GM12878 (cell line): ENCODE measurements at regions of chrX and their contacts with region 1.

Region 1: DNA sequence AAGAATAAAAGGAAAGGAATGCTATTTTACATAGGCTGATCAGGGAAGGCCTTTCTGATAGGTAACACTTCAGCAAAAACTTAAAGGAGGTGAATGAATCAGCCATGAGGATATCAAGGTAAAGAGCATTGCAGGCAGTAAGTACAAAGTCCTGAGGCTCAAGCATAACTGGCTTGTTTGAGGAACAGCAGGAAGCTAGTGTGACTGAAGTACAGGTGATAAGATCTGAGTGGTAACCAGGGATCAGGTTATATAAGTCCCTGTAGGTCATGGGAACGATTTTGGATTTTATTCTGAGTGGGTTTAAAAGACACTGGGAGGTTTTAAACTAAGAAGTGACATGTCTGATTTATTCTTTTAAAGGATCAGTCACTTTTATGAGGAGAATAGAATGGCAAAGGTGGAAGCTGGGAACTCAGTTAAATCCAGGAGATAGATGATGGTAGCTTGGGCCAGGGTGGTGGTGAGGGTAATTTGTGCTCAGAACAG is 47.1 kb upstream of the THOC2 start:
- DNase-seq: no peak
- ATAC-seq: no peak
- H3K4me3 ChIP-seq: no peak overlapping the region
- H3K27ac ChIP-seq: no peak overlapping the region
- H3K4me1 ChIP-seq: no peaks in the 10 kb centered on the region
- H3K27me3 ChIP-seq: no peaks in the 10 kb centered on the region
- CTCF ChIP-seq: no peak
- EP300 ChIP-seq: no peak
- POLR2A ChIP-seq: no peak
- RAD21 ChIP-seq: no peak

Region 2: DNA sequence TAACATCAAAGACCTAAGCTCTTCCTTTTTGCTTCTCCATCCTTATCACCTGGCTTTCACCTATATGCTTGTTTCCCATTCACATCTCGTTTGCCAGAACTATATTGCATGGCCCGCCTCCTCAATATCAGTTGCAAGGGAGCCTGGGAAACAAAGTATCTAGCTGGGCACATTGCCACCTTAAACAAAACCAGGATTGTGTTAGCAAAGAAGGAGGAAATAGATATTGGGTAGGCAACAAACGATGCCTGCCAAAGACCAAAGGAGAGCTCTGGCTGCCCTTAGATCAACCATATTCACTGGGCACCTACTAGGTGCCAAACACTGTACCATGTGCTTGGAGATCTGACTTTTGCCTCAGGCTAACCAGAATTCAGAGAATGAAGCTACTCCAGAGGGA is 488.3 kb before region 1 on chrX:
- CTCF ChIA-PET with region 1: no interaction called
- POLR2A ChIA-PET with region 1: no interaction called
- RAD21 ChIA-PET with region 1: no interaction called
- SMC1A ChIA-PET with region 1: no interaction called
- in situ Hi-C with region 1: no loop called
- intact Hi-C with region 1: no loop called
- DNase-seq: no peak
- ATAC-seq: no peak
- H3K4me3 ChIP-seq: no peak overlapping the region
- H3K27ac ChIP-seq: no peak overlapping the region
- H3K4me1 ChIP-seq: no peaks in the 10 kb centered on the region
- H3K27me3 ChIP-seq: no peaks in the 10 kb centered on the region
- CTCF ChIP-seq: no peak
- EP300 ChIP-seq: no peak
- POLR2A ChIP-seq: no peak
- RAD21 ChIP-seq: no peak

Region 3: DNA sequence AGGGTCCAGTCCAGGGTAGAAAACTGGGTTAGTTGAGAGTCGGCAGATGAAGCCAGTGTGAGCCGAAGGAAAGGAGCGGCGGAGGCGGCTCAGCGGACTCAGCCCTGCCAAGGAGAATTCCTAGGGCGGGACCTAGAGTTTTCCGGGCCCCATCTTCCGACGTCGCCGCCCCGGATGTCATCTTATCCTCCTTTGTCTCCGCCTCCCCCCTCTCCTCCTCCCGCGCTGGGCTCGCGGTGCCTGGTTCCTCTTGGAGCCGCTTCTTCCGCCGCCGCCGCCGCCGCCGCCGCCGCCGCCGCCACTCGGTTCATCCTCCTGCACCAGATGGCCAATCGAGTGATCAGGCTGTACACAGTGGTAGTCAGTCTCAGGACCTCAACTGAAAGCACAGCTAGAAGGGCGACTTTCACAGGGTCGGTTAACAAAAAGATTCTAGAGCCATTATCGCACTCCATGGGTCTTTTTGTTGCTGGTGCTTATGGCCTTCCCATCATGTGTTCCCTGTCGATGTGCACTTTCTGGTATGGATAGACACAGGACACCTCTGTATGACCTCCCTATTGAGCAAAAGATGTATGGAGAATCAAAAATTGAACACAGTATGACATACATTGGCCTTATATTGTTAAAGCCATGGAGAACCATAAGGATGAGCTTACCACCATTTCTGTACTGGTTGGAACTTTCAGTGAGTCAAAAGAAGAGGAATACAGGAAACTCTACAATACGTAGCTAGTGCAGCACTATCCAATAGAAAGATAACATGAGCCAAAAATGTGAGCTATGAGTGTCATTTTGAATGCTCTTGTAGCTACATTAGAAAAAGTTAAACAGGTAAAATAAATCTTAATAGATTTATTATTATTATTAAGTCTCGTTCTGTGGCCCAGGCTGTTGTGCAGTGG is 14.7 kb before region 1 on chrX:
- CTCF ChIA-PET with region 1: interaction called, 26 read pairs
- POLR2A ChIA-PET with region 1: no interaction called
- RAD21 ChIA-PET with region 1: interaction called, 10 read pairs
- SMC1A ChIA-PET with region 1: interaction called, 8 read pairs
- in situ Hi-C with region 1: no loop called
- intact Hi-C with region 1: no loop called
- DNase-seq: no peak
- ATAC-seq: peak; percentile 97
- H3K4me3 ChIP-seq: peak overlapping the region; percentile 51; the same call in 1 of the 2 replicates
- H3K27ac ChIP-seq: peak overlapping the region; percentile 44; the same call in 1 of the 2 replicates
- H3K4me1 ChIP-seq: no peaks in the 10 kb centered on the region
- H3K27me3 ChIP-seq: no peaks in the 10 kb centered on the region
- CTCF ChIP-seq: no peak
- EP300 ChIP-seq: no peak
- POLR2A ChIP-seq: peak; percentile 52; the same call in 1 of the 2 replicates
- RAD21 ChIP-seq: no peak

Region 4: DNA sequence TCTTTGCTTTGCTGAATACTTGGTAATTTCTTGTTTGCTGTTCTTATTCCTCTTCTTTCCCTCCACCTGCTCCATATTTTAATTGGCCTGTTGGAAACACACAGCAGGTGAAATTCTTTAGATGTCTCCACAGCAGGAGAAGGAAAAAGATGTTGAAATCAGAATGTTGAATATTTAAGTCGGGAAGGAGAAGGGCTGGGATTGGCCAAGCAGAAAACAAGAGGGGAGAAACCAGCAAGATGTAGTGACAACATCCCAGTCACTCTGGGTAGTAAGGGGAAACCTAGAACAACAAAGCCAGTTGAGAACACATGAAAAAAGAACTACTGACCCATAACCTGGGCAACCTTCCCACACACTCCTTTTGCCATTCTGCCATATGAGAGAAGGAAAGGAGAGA is 144.2 kb after region 1 on chrX:
- CTCF ChIA-PET with region 1: no interaction called
- POLR2A ChIA-PET with region 1: no interaction called
- RAD21 ChIA-PET with region 1: no interaction called
- SMC1A ChIA-PET with region 1: no interaction called
- in situ Hi-C with region 1: no loop called
- intact Hi-C with region 1: no loop called
- DNase-seq: no peak
- ATAC-seq: no peak
- H3K4me3 ChIP-seq: no peak overlapping the region
- H3K27ac ChIP-seq: no peak overlapping the region
- H3K4me1 ChIP-seq: no peaks in the 10 kb centered on the region
- H3K27me3 ChIP-seq: no peaks in the 10 kb centered on the region
- CTCF ChIP-seq: no peak
- EP300 ChIP-seq: no peak
- POLR2A ChIP-seq: no peak
- RAD21 ChIP-seq: no peak

Region 5: DNA sequence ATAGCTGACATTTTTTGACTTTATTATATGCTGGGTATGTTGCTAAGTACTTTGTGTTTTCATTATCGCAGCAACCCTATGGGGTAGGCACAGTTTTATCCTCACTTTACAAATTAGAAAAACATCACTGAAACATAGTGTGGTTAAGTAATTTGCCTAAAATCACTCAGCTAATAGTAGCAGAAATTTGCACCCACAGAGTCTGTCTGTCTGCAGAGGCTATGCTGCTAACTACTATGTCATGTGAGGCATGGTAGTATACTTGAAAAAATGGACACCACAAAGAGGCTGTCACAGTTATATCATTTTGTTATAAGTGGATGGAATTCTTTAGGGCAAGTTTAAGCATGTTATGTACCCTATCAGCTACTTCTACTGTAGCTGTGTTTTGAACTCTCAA is 250.6 kb after region 1 on chrX:
- CTCF ChIA-PET with region 1: no interaction called
- POLR2A ChIA-PET with region 1: no interaction called
- RAD21 ChIA-PET with region 1: no interaction called
- SMC1A ChIA-PET with region 1: no interaction called
- in situ Hi-C with region 1: no loop called
- intact Hi-C with region 1: no loop called
- DNase-seq: peak; percentile 4
- ATAC-seq: peak; percentile 67
- H3K4me3 ChIP-seq: no peak overlapping the region
- H3K27ac ChIP-seq: no peak overlapping the region
- H3K4me1 ChIP-seq: no peaks in the 10 kb centered on the region
- H3K27me3 ChIP-seq: no peaks in the 10 kb centered on the region
- CTCF ChIP-seq: no peak
- EP300 ChIP-seq: no peak
- POLR2A ChIP-seq: no peak
- RAD21 ChIP-seq: no peak